K562 (cell line): ENCODE measurements at regions of chr5 and their contacts with region 1.

Region 1: GRCh38 chr5:119631660-119632059 is 2.3 kb downstream of the FAM170A start:
- DNase-seq: no peak
- ATAC-seq: no peak
- H3K4me3 ChIP-seq: no peak overlapping the region
- H3K27ac ChIP-seq: no peak overlapping the region
- H3K4me1 ChIP-seq: no peaks in the 10 kb centered on the region; a peak in 1 of 5 replicates
- H3K27me3 ChIP-seq: peaks cover 2 to 22% of the 10 kb centered on the region in 2 experiments; a peak in 3 of 5 replicates
- CTCF ChIP-seq: no peak
- EP300 ChIP-seq: no peak
- POLR2A ChIP-seq: no peak
- RAD21 ChIP-seq: no peak

Region 2: DNA sequence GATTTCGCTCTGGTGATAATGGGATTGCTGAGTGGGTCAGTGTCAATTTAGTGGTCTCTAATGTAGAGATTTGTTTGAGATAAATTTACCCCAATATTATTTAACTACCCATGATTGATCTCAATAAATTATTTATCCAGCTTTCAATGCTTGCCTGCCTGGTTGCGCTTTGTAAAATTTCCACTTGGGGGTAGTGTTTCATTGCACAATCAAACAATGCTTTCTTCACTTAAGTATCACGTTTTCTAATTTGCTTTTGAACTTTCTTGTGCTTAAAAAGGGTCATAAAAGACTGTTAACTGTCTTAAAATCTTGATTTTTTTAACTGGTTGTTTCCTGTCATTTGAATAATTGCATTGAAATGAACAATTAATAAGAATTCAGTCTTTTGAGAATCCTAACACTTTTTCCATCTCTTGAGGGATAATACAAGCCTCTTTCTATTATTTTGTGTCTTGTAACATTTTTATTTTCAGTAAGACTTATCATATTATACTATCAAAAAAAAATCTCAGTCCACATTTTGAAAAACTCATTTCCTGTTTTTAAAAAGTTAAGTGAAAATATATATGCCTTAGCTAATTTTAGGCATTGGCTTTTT is 160.7 kb before region 1 on chr5:
- CTCF ChIA-PET with region 1: no interaction called
- POLR2A ChIA-PET with region 1: no interaction called
- in situ Hi-C with region 1: no loop called
- intact Hi-C with region 1: loop called (anchors 10 kb)
- DNase-seq: peak in 3 of 4 experiments; percentile 11 to 42 (median 14)
- ATAC-seq: peak; percentile 62; the same call in 2 of the 3 replicates
- H3K4me3 ChIP-seq: no peak overlapping the region
- H3K27ac ChIP-seq: no peak overlapping the region
- H3K4me1 ChIP-seq: no peaks in the 10 kb centered on the region
- H3K27me3 ChIP-seq: no peaks in the 10 kb centered on the region
- CTCF ChIP-seq: peak; percentile 30 to 66 (median 54); a peak in 5 of 6 replicates
- EP300 ChIP-seq: no peak
- POLR2A ChIP-seq: no peak
- RAD21 ChIP-seq: peak; percentile 46 to 72

Region 3: DNA sequence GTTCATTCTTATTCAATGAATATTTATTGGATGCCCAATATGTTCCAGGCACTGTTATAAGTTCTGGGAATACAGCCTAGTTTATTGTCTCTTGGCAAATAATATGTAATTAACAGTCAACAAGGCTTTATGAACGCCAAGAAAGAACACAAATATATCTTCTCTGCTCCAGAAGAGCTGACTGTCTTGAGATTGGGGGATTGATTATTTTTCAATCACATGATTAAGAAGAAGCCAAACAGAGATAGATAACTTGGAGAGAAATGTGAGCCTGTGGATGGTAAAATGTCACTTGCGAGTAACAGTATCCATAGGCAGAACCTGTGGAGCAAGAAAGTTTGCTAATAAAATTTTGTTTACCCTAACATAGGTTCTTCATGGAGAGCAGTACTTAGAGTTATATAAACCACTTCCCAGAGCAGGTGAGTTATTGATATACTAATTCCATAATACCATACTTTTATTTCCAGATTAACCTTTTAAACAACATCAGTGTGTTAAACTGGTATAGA is 129.9 kb before region 1 on chr5:
- CTCF ChIA-PET with region 1: no interaction called
- POLR2A ChIA-PET with region 1: no interaction called
- in situ Hi-C with region 1: no loop called
- intact Hi-C with region 1: no loop called
- DNase-seq: no peak
- ATAC-seq: no peak
- H3K4me3 ChIP-seq: no peak overlapping the region
- H3K27ac ChIP-seq: no peak overlapping the region
- H3K4me1 ChIP-seq: no peaks in the 10 kb centered on the region
- H3K27me3 ChIP-seq: no peaks in the 10 kb centered on the region
- CTCF ChIP-seq: no peak
- EP300 ChIP-seq: no peak
- POLR2A ChIP-seq: no peak
- RAD21 ChIP-seq: no peak